ENCODE measurements at regions of chr11 and their contacts with region 1.

Region 1: GRCh38 chr11:81644239-81644840 is 1089.3 kb downstream of the FAM181B start:
- DNase-seq: no peak
- H3K4me3 ChIP-seq: no peak overlapping the region
- H3K27ac ChIP-seq: no peak overlapping the region
- H3K4me1 ChIP-seq: no peaks in the 10 kb centered on the region
- H3K27me3 ChIP-seq: peaks cover 0 to 3% (median 0%) of the 10 kb centered on the region in 4 donors
- CTCF ChIP-seq: peak; percentile 39 to 62 (median 54)
- POLR2A ChIP-seq: no peak

Region 2: GRCh38 chr11:81476345-81476744 is 168.0 kb before region 1 on chr11:
- intact Hi-C with region 1: no loop called
- DNase-seq: no peak
- H3K4me3 ChIP-seq: no peak overlapping the region
- H3K27ac ChIP-seq: no peak overlapping the region
- H3K4me1 ChIP-seq: no peaks in the 10 kb centered on the region
- H3K27me3 ChIP-seq: no peaks in the 10 kb centered on the region
- CTCF ChIP-seq: no peak
- POLR2A ChIP-seq: no peak

Region 3: GRCh38 chr11:82233201-82233600 is 588.9 kb after region 1 on chr11:
- intact Hi-C with region 1: loop called (anchors 10 kb)
- DNase-seq: no peak
- H3K4me3 ChIP-seq: no peak overlapping the region
- H3K27ac ChIP-seq: no peak overlapping the region
- H3K4me1 ChIP-seq: no peaks in the 10 kb centered on the region
- H3K27me3 ChIP-seq: no peaks in the 10 kb centered on the region
- CTCF ChIP-seq: no peak
- POLR2A ChIP-seq: no peak

Measured in esophagus squamous epithelium (tissue), 5 donors.